ENCODE measurements at regions of chr16 and their contacts with region 1.

Region 1: GRCh38 chr16:53323924-53324323 is 110.3 kb upstream of the RBL2 start:
- DNase-seq: no peak
- ATAC-seq: no peak
- H3K4me3 ChIP-seq: no peak overlapping the region
- H3K27ac ChIP-seq: no peak overlapping the region
- H3K4me1 ChIP-seq: no peaks in the 10 kb centered on the region
- H3K27me3 ChIP-seq: no peaks in the 10 kb centered on the region
- CTCF ChIP-seq: no peak
- POLR2A ChIP-seq: no peak

Region 2: GRCh38 chr16:53309457-53309856 is 14.5 kb before region 1 on chr16:
- intact Hi-C with region 1: no loop called
- DNase-seq: no peak
- ATAC-seq: no peak
- H3K4me3 ChIP-seq: no peak overlapping the region
- H3K27ac ChIP-seq: no peak overlapping the region
- H3K4me1 ChIP-seq: no peaks in the 10 kb centered on the region
- H3K27me3 ChIP-seq: no peaks in the 10 kb centered on the region
- CTCF ChIP-seq: no peak
- POLR2A ChIP-seq: no peak

Region 3: GRCh38 chr16:53457670-53458069 is 133.7 kb after region 1 on chr16:
- intact Hi-C with region 1: loop called in 2 of 10 experiments (anchors 10 kb)
- DNase-seq: no peak
- ATAC-seq: peak in 1 of 4 donors; percentile 58
- H3K4me3 ChIP-seq: peak overlapping the region in 1 of 12 donors; percentile 27
- H3K27ac ChIP-seq: peak overlapping the region in 2 of 12 donors; percentile 6 to 81
- H3K4me1 ChIP-seq: peaks cover 0 to 23% (median 0%) of the 10 kb centered on the region in 12 donors
- H3K27me3 ChIP-seq: no peaks in the 10 kb centered on the region
- CTCF ChIP-seq: no peak
- POLR2A ChIP-seq: no peak

Region 4: DNA sequence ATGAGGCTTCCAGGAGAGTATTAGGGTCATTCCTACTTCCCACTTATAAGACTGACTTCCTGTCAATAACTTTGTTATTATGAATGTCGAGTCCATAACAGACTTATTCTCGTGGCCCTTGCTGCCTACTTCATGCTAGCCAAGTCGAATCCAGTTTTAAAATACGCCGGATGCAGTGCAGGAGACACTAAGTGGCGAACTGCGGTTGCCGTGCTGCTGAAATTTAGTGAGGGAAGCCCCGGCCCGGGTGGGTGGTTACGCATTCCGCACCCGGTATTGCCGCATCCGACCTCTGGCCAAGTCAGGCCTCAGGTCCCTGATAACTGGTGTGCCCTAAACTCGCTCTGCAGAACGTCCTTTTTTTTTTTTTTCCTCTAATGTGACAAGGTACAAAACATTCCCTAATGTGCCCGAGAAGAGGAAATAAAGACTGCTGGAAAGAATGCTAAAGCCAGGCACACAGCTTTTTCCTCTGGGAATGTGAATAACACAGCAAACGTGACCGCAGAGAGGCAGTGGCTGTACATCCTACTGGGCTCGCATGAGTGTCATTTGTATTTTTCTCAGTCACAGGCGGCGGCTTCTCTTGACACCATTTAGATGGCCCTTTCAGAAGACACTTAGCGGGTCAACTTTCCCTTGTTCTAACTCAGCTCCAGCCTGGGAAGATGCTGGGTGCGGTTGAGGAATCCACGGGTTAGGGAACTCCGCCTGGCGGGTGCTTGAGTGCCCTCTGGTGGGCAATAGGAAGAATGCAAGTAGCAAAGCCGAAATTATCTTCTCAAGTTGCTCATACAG is 186.2 kb after region 1 on chr16:
- intact Hi-C with region 1: loop called in 1 of 10 experiments (anchors 10 kb)
- DNase-seq: peak; percentile 70 to 83 (median 74)
- ATAC-seq: peak; percentile 70 to 79 (median 76)
- H3K4me3 ChIP-seq: peak overlapping the region in 6 of 12 donors; percentile 9 to 36 (median 26)
- H3K27ac ChIP-seq: peak overlapping the region; percentile 60 to 88 (median 83)
- H3K4me1 ChIP-seq: peaks cover 6 to 29% (median 16%) of the 10 kb centered on the region in 12 donors
- H3K27me3 ChIP-seq: no peaks in the 10 kb centered on the region
- CTCF ChIP-seq: peak; percentile 91 to 99 (median 96)
- POLR2A ChIP-seq: no peak

Measured in heart left ventricle (tissue), 16 donors.